B cell (primary cell): ENCODE measurements at regions of chr19 and their contacts with region 1.

Region 1: GRCh38 chr19:44903602-44904425 is 1.8 kb upstream of the APOE start:
- DNase-seq: peak; percentile 79
- ATAC-seq: peak; percentile 69
- H3K4me3 ChIP-seq: no peak overlapping the region
- H3K4me3 Mint-ChIP-seq: no peak overlapping the region
- H3K27ac ChIP-seq: no peak overlapping the region
- H3K27ac Mint-ChIP-seq: no peak overlapping the region
- H3K4me1 ChIP-seq: peaks cover 15 to 19% of the 10 kb centered on the region in 2 donors
- H3K4me1 Mint-ChIP-seq: peaks cover 16% of the 10 kb centered on the region
- H3K27me3 ChIP-seq: peaks cover 0 to 26% (median 10%) of the 10 kb centered on the region in 4 experiments
- H3K27me3 Mint-ChIP-seq: peaks cover 18% of the 10 kb centered on the region
- CTCF ChIP-seq: peak; percentile 98

Region 2: GRCh38 chr19:45187421-45188100 is 283.7 kb after region 1 on chr19:
- CTCF ChIA-PET with region 1: interaction called, 4 read pairs
- POLR2A ChIA-PET with region 1: no interaction called
- intact Hi-C with region 1: loop called (anchors 1 kb)
- DNase-seq: peak; percentile 71
- ATAC-seq: peak; percentile 84
- H3K4me3 ChIP-seq: no peak overlapping the region
- H3K4me3 Mint-ChIP-seq: peak overlapping the region; percentile 18
- H3K27ac ChIP-seq: no peak overlapping the region
- H3K27ac Mint-ChIP-seq: peak overlapping the region; percentile 50
- H3K4me1 ChIP-seq: peaks cover 12 to 21% of the 10 kb centered on the region in 2 donors
- H3K4me1 Mint-ChIP-seq: peaks cover 21% of the 10 kb centered on the region
- H3K27me3 ChIP-seq: no peaks in the 10 kb centered on the region
- H3K27me3 Mint-ChIP-seq: no peaks in the 10 kb centered on the region
- CTCF ChIP-seq: peak; percentile 85